ENCODE measurements at regions of chr1 and their contacts with region 1.

Region 1: DNA sequence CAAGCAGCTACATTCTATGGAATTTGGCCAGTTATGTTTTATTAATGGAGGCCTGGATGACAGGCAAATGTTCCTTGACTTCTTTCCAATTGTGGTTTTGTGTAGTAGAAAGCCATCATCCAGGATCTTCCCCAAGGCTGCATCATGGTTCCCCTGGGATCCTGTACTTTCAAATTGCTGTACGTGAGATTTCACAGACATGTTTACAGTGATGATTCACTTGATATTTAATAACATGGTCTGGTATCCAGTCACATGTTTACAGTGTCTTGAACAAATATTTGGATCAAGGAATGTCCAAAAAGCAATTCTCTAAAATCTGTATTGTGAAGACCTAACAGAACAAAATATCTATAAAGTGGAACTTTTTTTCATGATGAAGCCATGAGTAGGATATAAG is 68.3 kb upstream of the ST6GALNAC3 start:
- DNase-seq: no peak
- H3K4me3 Mint-ChIP-seq: no peak overlapping the region
- H3K27ac Mint-ChIP-seq: no peak overlapping the region
- H3K4me1 Mint-ChIP-seq: no peaks in the 10 kb centered on the region
- H3K27me3 Mint-ChIP-seq: no peaks in the 10 kb centered on the region

Region 2: GRCh38 chr1:76105372-76105771 is 99.1 kb after region 1 on chr1:
- intact Hi-C with region 1: no loop called
- DNase-seq: no peak
- H3K4me3 Mint-ChIP-seq: no peak overlapping the region
- H3K27ac Mint-ChIP-seq: no peak overlapping the region
- H3K4me1 Mint-ChIP-seq: peaks cover 8% of the 10 kb centered on the region
- H3K27me3 Mint-ChIP-seq: peaks cover 8% of the 10 kb centered on the region

Region 3: GRCh38 chr1:76547916-76548315 is 541.7 kb after region 1 on chr1:
- intact Hi-C with region 1: loop called (anchors 5 kb)
- DNase-seq: no peak
- H3K4me3 Mint-ChIP-seq: no peak overlapping the region
- H3K27ac Mint-ChIP-seq: no peak overlapping the region
- H3K4me1 Mint-ChIP-seq: no peaks in the 10 kb centered on the region
- H3K27me3 Mint-ChIP-seq: no peaks in the 10 kb centered on the region